ENCODE measurements at regions of chr16 and their contacts with region 1.

Region 1: GRCh38 chr16:29995911-29996772 is at the start of gene INO80E:
- DNase-seq: peak; percentile 100
- H3K4me3 Mint-ChIP-seq: peak within 1 kb of the TSS; percentile 95
- H3K27ac Mint-ChIP-seq: peak within 1 kb of the TSS; percentile 98
- H3K4me1 Mint-ChIP-seq: peaks cover 26% of the 10 kb centered on the region
- H3K27me3 Mint-ChIP-seq: no peaks in the 10 kb centered on the region
- total RNA-seq, gene INO80E: 129 and 133 TPM in 2 replicates

Region 2: GRCh38 chr16:28823872-28824716 is 1172.0 kb before region 1 on chr16:
- intact Hi-C with region 1: loop called (anchors 5 kb)
- DNase-seq: peak; percentile 98
- H3K4me3 Mint-ChIP-seq: peak overlapping the region; percentile 100
- H3K27ac Mint-ChIP-seq: peak overlapping the region; percentile 100
- H3K4me1 Mint-ChIP-seq: peaks cover 47% of the 10 kb centered on the region
- H3K27me3 Mint-ChIP-seq: peaks cover 2% of the 10 kb centered on the region

Region 3: GRCh38 chr16:29805378-29806098 is 190.6 kb before region 1 on chr16:
- intact Hi-C with region 1: loop called (anchors 2 kb)
- DNase-seq: peak; percentile 99
- H3K4me3 Mint-ChIP-seq: peak overlapping the region; percentile 96
- H3K27ac Mint-ChIP-seq: peak overlapping the region; percentile 99
- H3K4me1 Mint-ChIP-seq: peaks cover 42% of the 10 kb centered on the region
- H3K27me3 Mint-ChIP-seq: no peaks in the 10 kb centered on the region

Region 4: GRCh38 chr16:29926005-29926710 is 70.0 kb before region 1 on chr16 and contains the start of gene KCTD13:
- intact Hi-C with region 1: loop called (anchors 1 kb)
- DNase-seq: peak; percentile 99
- H3K4me3 Mint-ChIP-seq: peak within 1 kb of the TSS; percentile 91
- H3K27ac Mint-ChIP-seq: peak within 1 kb of the TSS; percentile 95
- H3K4me1 Mint-ChIP-seq: peaks cover 33% of the 10 kb centered on the region
- H3K27me3 Mint-ChIP-seq: no peaks in the 10 kb centered on the region
- total RNA-seq, gene KCTD13: 51.4 and 58.8 TPM in 2 replicates

Region 5: DNA sequence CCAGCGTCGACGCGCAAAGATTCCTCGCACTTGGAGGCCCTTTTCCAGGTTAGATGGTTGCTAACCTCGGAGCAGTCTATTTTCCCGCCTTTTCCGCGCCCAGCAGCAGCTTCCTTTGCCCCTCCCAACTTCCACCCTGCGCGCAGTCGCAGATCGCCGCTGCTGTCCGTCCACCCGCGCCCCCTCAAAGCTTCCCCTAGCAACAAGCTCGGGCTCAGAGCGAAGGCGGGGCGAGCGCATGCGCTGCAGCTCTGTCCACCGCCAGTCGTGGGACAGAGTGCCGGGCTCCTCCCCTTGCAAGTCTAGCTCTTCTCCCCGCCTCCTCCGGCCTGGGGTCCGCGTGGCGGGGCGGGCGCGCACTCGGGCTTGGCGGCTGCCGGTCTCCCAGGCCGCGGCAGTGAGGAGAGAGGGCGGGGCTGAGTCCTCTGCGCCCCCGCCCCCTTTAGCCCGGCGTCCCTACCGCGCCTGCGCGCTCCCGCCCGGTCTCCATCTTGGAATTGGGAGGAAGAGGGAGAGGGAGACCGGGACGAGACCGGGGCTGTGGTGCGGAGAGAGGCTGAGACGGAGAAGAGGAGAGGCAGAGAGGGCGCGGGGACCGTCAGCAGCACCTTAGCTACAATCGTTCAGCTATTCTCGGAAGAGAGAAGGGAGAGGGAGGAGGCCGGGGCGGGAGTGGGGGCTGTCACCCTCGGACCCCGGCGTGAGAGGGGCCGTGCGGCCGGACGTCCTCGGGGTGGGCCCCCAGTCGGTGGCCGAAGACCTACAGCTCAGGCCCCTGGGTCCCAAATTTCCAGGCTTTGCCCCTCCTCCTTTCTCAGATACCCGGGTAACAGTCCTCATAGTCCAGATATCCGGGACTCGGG is 22.5 kb before region 1 on chr16 and contains the start of gene TAOK2:
- intact Hi-C with region 1: loop called (anchors 1 kb)
- DNase-seq: peak; percentile 99
- H3K4me3 Mint-ChIP-seq: peak within 1 kb of the TSS; percentile 91
- H3K27ac Mint-ChIP-seq: peak within 1 kb of the TSS; percentile 95
- H3K4me1 Mint-ChIP-seq: peaks cover 30% of the 10 kb centered on the region
- H3K27me3 Mint-ChIP-seq: no peaks in the 10 kb centered on the region
- total RNA-seq, gene TAOK2: 35.8 and 38.7 TPM in 2 replicates

Region 6: DNA sequence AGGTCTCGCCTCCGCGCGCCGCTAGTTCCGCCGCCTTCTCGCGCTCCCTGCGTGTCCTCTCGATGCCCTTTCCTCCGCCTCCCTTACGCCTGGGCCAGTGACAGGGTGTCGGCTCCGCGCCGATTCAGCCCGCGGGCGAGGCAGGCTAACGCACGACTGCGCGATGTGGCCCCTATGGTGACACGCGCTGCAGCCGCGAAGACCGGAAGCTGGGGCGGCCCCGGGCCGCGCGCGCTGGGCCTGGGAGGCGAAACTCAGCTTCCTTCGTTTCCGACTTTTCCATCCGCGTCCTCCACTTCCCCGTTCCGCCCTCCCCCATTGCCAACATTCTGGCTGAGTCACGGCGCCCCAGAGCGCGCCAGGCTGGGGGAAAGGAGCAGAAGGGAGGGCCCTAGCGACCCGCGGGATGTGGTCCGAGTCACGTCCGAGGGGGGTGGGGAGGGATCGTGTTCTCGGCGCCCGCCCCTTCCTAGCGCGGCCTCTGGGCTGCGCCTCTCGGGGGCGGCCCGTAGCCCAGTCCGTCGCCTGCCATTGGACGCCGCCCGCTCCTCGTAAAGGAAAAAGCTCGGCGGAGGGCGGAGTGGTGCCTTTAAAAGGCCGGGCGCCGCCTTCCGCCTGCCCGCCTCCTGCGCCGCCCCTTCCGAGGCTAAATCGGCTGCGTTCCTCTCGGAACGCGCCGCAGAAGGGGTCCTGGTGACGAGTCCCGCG is 69.2 kb after region 1 on chr16 and contains the start of gene ALDOA:
- intact Hi-C with region 1: loop called (anchors 2 kb)
- DNase-seq: peak; percentile 99
- H3K4me3 Mint-ChIP-seq: peak within 1 kb of the TSS; percentile 92
- H3K27ac Mint-ChIP-seq: peak within 1 kb of the TSS; percentile 99
- H3K4me1 Mint-ChIP-seq: peaks cover 35% of the 10 kb centered on the region
- H3K27me3 Mint-ChIP-seq: no peaks in the 10 kb centered on the region
- total RNA-seq, gene ALDOA: 2,074 and 2,109 TPM in 2 replicates

Region 7: GRCh38 chr16:30698139-30698815 is 702.1 kb after region 1 on chr16:
- intact Hi-C with region 1: loop called (anchors 2 kb)
- DNase-seq: peak; percentile 100
- H3K4me3 Mint-ChIP-seq: peak overlapping the region; percentile 97
- H3K27ac Mint-ChIP-seq: peak overlapping the region; percentile 100
- H3K4me1 Mint-ChIP-seq: peaks cover 34% of the 10 kb centered on the region
- H3K27me3 Mint-ChIP-seq: no peaks in the 10 kb centered on the region